PC-3 (cell line): ENCODE measurements at regions of chr15 and their contacts with region 1.

Region 1: DNA sequence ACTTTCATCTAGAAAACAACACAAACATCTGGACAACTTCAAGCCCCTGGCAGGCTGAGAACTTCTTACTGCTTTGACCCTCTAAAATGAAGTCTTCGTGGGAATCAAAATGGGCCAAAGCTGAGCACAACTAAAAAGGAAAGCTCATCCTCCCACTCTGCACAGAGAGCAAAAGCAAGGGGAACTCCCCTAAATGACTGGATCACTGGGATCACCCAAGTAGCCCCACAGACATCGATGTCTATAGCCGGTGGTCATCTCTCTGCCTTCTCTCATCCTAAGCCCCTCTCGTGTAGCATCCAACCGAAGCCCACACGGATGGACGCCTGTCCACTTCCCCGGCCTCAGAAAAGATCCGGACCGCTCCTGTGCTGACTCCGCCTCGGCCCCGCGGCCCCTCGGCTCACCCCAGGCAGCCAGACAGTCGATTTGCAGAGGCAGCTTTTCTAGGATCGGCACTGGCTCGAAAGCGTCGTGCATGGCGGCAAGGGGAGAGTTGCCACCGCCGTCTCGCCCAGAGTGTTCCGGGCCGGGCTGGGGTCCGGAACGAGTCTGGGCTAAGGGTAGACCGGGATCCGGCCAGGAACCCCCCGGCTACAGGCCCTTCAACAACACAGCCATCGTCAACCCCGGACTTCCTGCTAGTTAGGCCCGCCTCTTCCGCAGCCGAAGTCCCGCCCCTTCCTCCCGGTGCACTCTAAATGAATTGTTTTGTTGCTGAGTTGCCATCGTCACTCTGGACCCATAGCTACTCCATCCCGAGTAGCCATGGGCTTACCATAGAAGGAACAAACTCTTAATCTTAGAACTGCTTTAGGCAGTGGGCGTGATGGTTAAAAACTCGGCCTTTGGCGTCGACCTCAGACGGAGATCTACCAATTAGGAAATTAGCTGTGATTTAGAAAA is at the start of gene VPS39:
- DNase-seq: peak; percentile 83
- ATAC-seq: peak; percentile 95
- H3K4me3 ChIP-seq: peak within 1 kb of the TSS; percentile 98
- H3K27ac ChIP-seq: peak within 1 kb of the TSS; percentile 22
- H3K4me1 ChIP-seq: peaks cover 24% of the 10 kb centered on the region
- H3K27me3 ChIP-seq: no peaks in the 10 kb centered on the region
- CTCF ChIP-seq: no peak
- total RNA-seq, gene VPS39: 28.5 and 46.4 TPM in 2 replicates

Region 2: DNA sequence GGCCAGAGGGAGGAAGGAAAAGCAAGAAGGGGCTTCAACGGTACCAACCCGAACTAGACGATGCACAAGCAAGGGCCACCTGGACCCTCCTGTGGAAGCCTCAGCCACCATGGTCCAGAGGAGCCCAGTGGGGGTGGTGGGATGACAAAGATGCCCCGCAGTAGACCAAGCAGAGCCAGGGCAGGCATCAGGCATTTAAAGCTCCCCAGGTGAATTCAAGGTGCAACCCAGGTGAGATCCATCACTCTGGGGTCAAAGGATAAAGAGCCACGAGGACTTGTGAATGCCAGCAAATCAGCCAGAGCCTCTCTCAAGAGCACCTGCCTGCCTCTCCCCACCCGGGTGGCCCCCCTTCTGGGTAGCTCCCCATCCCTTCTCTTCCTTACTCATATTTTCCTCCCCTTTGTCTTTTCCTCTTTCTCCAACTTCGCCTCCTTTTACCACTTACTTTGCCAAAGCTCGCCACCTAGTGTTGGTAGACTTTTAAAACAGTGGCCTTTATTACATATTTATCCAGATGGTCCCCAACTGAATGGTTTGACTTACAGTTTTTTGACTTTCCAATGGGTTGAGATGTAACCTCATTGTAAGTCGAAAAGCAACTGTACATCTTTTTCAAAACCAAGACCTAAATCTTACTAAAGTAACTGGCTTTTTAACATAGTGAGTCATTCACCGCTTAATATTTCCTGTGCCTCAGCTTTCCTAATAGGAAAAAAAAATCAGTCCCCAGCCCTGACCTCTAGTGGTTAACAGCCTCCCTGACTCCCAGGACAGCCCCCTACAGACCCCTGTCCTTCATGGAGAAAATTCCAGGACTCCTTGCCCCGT is 70.3 kb before region 1 on chr15:
- CTCF ChIA-PET with region 1: no interaction called
- POLR2A ChIA-PET with region 1: no interaction called
- intact Hi-C with region 1: no loop called
- DNase-seq: peak; percentile 81
- ATAC-seq: peak; percentile 50
- H3K4me3 ChIP-seq: no peak overlapping the region
- H3K27ac ChIP-seq: no peak overlapping the region
- H3K4me1 ChIP-seq: peaks cover 17% of the 10 kb centered on the region
- H3K27me3 ChIP-seq: no peaks in the 10 kb centered on the region
- CTCF ChIP-seq: peak; percentile 88

Region 3: GRCh38 chr15:42474827-42475226 is 266.9 kb after region 1 on chr15:
- CTCF ChIA-PET with region 1: no interaction called
- POLR2A ChIA-PET with region 1: no interaction called
- intact Hi-C with region 1: loop called (anchors 10 kb)
- DNase-seq: no peak
- ATAC-seq: no peak
- H3K4me3 ChIP-seq: no peak overlapping the region
- H3K27ac ChIP-seq: no peak overlapping the region
- H3K4me1 ChIP-seq: no peaks in the 10 kb centered on the region
- H3K27me3 ChIP-seq: no peaks in the 10 kb centered on the region
- CTCF ChIP-seq: no peak